ENCODE measurements at regions of chr22 and their contacts with region 1.

Region 1: GRCh38 chr22:33209930-33210784 is 152.0 kb upstream of the SYN3 start:
- DNase-seq: peak; percentile 33

Region 2: GRCh38 chr22:33018232-33018864 is 191.8 kb before region 1 on chr22:
- in situ Hi-C with region 1: loop called (anchors 25 kb)
- DNase-seq: peak; percentile 39

Region 3: DNA sequence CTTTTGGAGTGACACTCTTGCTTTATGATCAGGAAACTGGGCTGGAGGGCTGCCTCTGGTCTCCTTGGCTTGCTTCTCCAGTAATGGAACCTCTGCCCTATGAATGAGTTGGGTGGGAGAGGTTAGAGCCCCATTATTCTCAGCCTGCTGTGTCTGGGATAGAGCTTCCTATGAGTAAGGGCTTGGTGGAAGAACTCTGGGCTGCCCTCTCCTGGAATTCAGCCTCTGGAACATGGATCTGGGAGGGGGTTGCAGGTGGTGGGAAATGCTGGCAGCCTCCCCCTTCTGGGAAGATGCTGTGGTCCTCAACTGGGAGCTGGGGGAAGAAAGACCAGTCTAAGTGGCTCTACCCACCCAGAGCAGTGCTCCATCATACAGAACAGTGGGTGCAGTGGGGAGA is 70.2 kb before region 1 on chr22:
- in situ Hi-C with region 1: no loop called
- DNase-seq: no peak

Measured in ACHN (cell line).